ENCODE measurements at regions of chr11 and their contacts with region 1.

Region 1: DNA sequence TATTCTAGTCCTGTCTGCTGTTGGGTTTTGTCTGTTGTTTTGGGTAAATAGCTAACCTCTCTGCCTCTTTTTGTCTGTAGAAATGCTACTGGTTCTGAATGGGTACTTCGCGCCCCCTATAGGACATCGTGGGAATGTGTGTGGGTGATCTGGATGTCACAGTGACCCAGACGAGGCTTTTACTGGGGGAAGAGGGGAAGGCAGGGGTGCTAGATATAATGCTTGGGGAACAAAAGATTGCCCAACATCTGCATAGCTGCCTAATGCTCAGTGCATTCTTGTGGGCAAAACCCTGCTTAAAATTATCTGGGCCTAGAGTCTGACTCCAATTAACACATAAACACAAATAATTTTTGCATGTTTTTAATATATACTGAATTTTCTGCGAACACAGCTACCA is 57.7 kb downstream of the BMAL1 start:
- DNase-seq: peak; percentile 71 to 76
- ATAC-seq: peak in 1 of 2 experiments; percentile 21; a peak in 3 of 6 replicates
- H3K4me3 ChIP-seq: no peak overlapping the region
- H3K27ac ChIP-seq: peak overlapping the region; percentile 87 to 95
- H3K4me1 ChIP-seq: peaks cover 83% of the 10 kb centered on the region
- CTCF ChIP-seq: peak; percentile 77
- EP300 ChIP-seq: no peak
- POLR2A ChIP-seq: no peak
- RAD21 ChIP-seq: peak; percentile 78 to 87

Region 2: DNA sequence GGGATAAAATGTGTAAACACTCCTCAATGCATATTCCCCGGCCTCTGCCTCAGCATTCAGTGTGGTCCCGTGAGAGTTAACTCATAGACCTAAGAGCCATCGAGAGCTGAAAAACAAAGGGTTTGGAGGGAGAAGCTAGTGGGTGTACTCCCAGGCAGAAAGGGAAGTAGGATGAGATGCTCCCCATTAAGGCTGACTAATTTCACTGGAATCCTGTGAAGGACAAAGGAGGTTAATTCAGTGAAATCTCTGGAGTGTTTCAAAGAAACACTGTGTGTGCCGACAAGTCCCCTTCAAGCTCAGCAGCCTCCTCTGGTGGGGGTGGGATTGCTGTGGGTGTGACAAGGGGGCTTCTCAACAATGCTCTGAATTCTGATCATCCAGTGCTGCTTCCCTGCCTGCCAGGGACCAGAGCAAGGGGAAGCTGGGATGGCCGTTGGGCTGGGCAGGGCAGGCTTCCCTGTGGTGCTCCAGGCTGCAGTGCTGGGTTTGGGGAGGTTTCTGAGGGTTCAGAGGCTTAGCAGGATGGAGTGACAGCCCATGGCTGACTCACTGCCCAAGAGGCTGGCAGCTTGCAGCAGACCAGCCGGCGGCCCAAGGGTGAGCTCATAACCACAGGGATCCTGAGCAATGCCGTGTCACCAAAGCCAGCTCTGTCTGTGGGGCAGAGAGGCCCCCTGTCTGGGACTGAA is 119.2 kb before region 1 on chr11:
- CTCF ChIA-PET with region 1: interaction called, 320 read pairs
- POLR2A ChIA-PET with region 1: interaction called, 32 read pairs
- DNase-seq: peak; percentile 90 to 91
- ATAC-seq: peak; percentile 96 to 97
- H3K4me3 ChIP-seq: peak overlapping the region; percentile 15; the same call in 1 of the 3 replicates
- H3K27ac ChIP-seq: peak overlapping the region; percentile 89 to 91
- H3K4me1 ChIP-seq: peaks cover 35% of the 10 kb centered on the region
- CTCF ChIP-seq: no peak
- EP300 ChIP-seq: peak in 1 of 2 experiments; percentile 65; a peak in 1 of 5 replicates
- POLR2A ChIP-seq: no peak
- RAD21 ChIP-seq: peak in 1 of 2 experiments; percentile 15; a peak in 3 of 5 replicates

Region 3: GRCh38 chr11:13249996-13250395 is 85.3 kb before region 1 on chr11:
- CTCF ChIA-PET with region 1: interaction called, 18 read pairs
- POLR2A ChIA-PET with region 1: no interaction called
- DNase-seq: peak in 1 of 2 experiments; percentile 27
- ATAC-seq: peak; percentile 75 to 82
- H3K4me3 ChIP-seq: no peak overlapping the region
- H3K27ac ChIP-seq: no peak overlapping the region
- H3K4me1 ChIP-seq: peaks cover 6% of the 10 kb centered on the region
- CTCF ChIP-seq: peak; percentile 52
- EP300 ChIP-seq: no peak
- POLR2A ChIP-seq: no peak
- RAD21 ChIP-seq: peak; percentile 66 to 70

Region 4: GRCh38 chr11:13276832-13277767 is 58.2 kb before region 1 on chr11:
- CTCF ChIA-PET with region 1: interaction called, 11 read pairs
- POLR2A ChIA-PET with region 1: interaction called, 4 read pairs
- DNase-seq: peak; percentile 98 to 99
- ATAC-seq: peak; percentile 93 to 99
- H3K4me3 ChIP-seq: peak overlapping the region; percentile 96
- H3K27ac ChIP-seq: peak overlapping the region; percentile 83 to 93
- H3K4me1 ChIP-seq: peaks cover 24% of the 10 kb centered on the region; the same call in 2 of the 3 replicates
- CTCF ChIP-seq: no peak
- EP300 ChIP-seq: no peak
- POLR2A ChIP-seq: peak; percentile 70
- RAD21 ChIP-seq: no peak

Region 5: GRCh38 chr11:13313005-13313819 is 22.1 kb before region 1 on chr11:
- CTCF ChIA-PET with region 1: interaction called, 20 read pairs
- POLR2A ChIA-PET with region 1: no interaction called
- DNase-seq: no peak
- ATAC-seq: no peak
- H3K4me3 ChIP-seq: no peak overlapping the region
- H3K27ac ChIP-seq: no peak overlapping the region
- H3K4me1 ChIP-seq: peaks cover 23% of the 10 kb centered on the region
- CTCF ChIP-seq: no peak
- EP300 ChIP-seq: no peak
- POLR2A ChIP-seq: no peak
- RAD21 ChIP-seq: no peak